CD4-positive, alpha-beta memory T cell (primary cell): ENCODE measurements at regions of chr2 and their contacts with region 1.

Region 1: GRCh38 chr2:97718051-97718882 is 4.9 kb downstream of the ZAP70 start:
- DNase-seq: peak; percentile 73 to 86 (median 80)
- H3K4me3 ChIP-seq: peak overlapping the region; percentile 49 to 94
- H3K4me3 Mint-ChIP-seq: peak overlapping the region; percentile 93 to 98 (median 96)
- H3K27ac ChIP-seq: peak overlapping the region; percentile 91
- H3K27ac Mint-ChIP-seq: peak overlapping the region; percentile 92 to 99 (median 95)
- H3K4me1 ChIP-seq: peaks cover 92% of the 10 kb centered on the region
- H3K4me1 Mint-ChIP-seq: peaks cover 61 to 95% (median 73%) of the 10 kb centered on the region in 4 donors
- H3K27me3 ChIP-seq: no peaks in the 10 kb centered on the region
- H3K27me3 Mint-ChIP-seq: no peaks in the 10 kb centered on the region

Region 2: GRCh38 chr2:97645695-97646629 is 72.3 kb before region 1 on chr2 and contains the start of gene COX5B:
- CTCF ChIA-PET with region 1: interaction called, 10 read pairs
- POLR2A ChIA-PET with region 1: interaction called, 27 read pairs
- intact Hi-C with region 1: no loop called
- DNase-seq: peak; percentile 97 to 99 (median 98)
- H3K4me3 ChIP-seq: peak within 1 kb of the TSS; percentile 84 to 87
- H3K4me3 Mint-ChIP-seq: peak within 1 kb of the TSS; percentile 91 to 98 (median 96)
- H3K27ac ChIP-seq: peak within 1 kb of the TSS; percentile 88
- H3K27ac Mint-ChIP-seq: peak within 1 kb of the TSS; percentile 92 to 99 (median 98)
- H3K4me1 ChIP-seq: peaks cover 20% of the 10 kb centered on the region
- H3K4me1 Mint-ChIP-seq: peaks cover 18 to 33% (median 27%) of the 10 kb centered on the region in 4 donors
- H3K27me3 ChIP-seq: no peaks in the 10 kb centered on the region
- H3K27me3 Mint-ChIP-seq: no peaks in the 10 kb centered on the region
- total RNA-seq, gene COX5B: 118 to 120 TPM

Region 3: GRCh38 chr2:97740590-97741182 is 22.4 kb after region 1 on chr2:
- CTCF ChIA-PET with region 1: interaction called, 198 read pairs
- POLR2A ChIA-PET with region 1: interaction called, 284 read pairs
- intact Hi-C with region 1: no loop called
- DNase-seq: peak in 4 of 5 donors; percentile 31 to 43 (median 34)
- H3K4me3 ChIP-seq: no peak overlapping the region
- H3K4me3 Mint-ChIP-seq: peak overlapping the region in 3 of 8 donors; percentile 20 to 61 (median 50)
- H3K27ac ChIP-seq: no peak overlapping the region
- H3K27ac Mint-ChIP-seq: peak overlapping the region; percentile 25 to 90 (median 79)
- H3K4me1 ChIP-seq: peaks cover 55% of the 10 kb centered on the region
- H3K4me1 Mint-ChIP-seq: peaks cover 42 to 77% (median 57%) of the 10 kb centered on the region in 4 donors
- H3K27me3 ChIP-seq: no peaks in the 10 kb centered on the region
- H3K27me3 Mint-ChIP-seq: no peaks in the 10 kb centered on the region

Region 4: DNA sequence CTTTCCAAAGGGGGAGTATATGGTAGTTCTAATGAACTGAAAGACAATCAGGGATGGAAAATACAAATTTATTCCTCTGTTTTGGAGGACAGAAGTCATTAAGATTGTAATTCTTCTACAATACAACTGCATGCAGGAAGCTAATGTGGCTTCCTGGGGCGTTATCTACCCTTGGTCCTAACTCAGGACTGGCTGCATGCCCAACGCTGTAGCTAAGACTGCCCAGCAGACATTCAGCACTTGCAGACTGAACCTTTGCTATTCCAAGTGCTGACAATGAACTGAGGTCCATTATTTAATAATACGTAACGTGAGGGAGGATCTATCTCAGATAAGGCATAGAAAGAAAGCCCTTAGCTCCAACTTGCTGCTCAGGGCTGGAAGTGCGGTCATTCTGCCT is 48.3 kb after region 1 on chr2:
- CTCF ChIA-PET with region 1: interaction called, 27 read pairs
- POLR2A ChIA-PET with region 1: interaction called, 3 read pairs
- intact Hi-C with region 1: no loop called
- DNase-seq: no peak
- H3K4me3 ChIP-seq: no peak overlapping the region
- H3K4me3 Mint-ChIP-seq: no peak overlapping the region
- H3K27ac ChIP-seq: no peak overlapping the region
- H3K27ac Mint-ChIP-seq: peak overlapping the region in 2 of 7 donors; percentile 0 to 8
- H3K4me1 ChIP-seq: peaks cover 8% of the 10 kb centered on the region
- H3K4me1 Mint-ChIP-seq: peaks cover 4 to 23% (median 12%) of the 10 kb centered on the region in 4 donors
- H3K27me3 ChIP-seq: no peaks in the 10 kb centered on the region
- H3K27me3 Mint-ChIP-seq: no peaks in the 10 kb centered on the region

Region 5: GRCh38 chr2:97995734-97996624 is 277.7 kb after region 1 on chr2 and contains the start of gene TMEM131:
- CTCF ChIA-PET with region 1: no interaction called
- POLR2A ChIA-PET with region 1: no interaction called
- intact Hi-C with region 1: loop called (anchors 10 kb)
- DNase-seq: peak; percentile 93 to 97 (median 95)
- H3K4me3 ChIP-seq: peak within 1 kb of the TSS; percentile 69 to 95
- H3K4me3 Mint-ChIP-seq: peak within 1 kb of the TSS; percentile 90 to 100 (median 97)
- H3K27ac ChIP-seq: peak within 1 kb of the TSS; percentile 89
- H3K27ac Mint-ChIP-seq: peak within 1 kb of the TSS; percentile 84 to 98 (median 94)
- H3K4me1 ChIP-seq: peaks cover 37% of the 10 kb centered on the region
- H3K4me1 Mint-ChIP-seq: peaks cover 28 to 47% (median 36%) of the 10 kb centered on the region in 4 donors
- H3K27me3 ChIP-seq: no peaks in the 10 kb centered on the region
- H3K27me3 Mint-ChIP-seq: peaks cover 0 to 2% of the 10 kb centered on the region in 2 donors
- total RNA-seq, gene TMEM131: 47.5 to 47.6 TPM